ENCODE measurements at regions of chr22 and their contacts with region 1.

Region 1: GRCh38 chr22:29245637-29246385 is 22.0 kb downstream of the RHBDD3 start:
- DNase-seq: peak; percentile 67 to 81 (median 79)
- H3K4me3 ChIP-seq: no peak overlapping the region
- H3K27ac ChIP-seq: no peak overlapping the region
- H3K4me1 ChIP-seq: peaks cover 0 to 9% (median 5%) of the 10 kb centered on the region in 4 experiments
- H3K27me3 ChIP-seq: no peaks in the 10 kb centered on the region

Region 2: GRCh38 chr22:29225422-29226131 is 20.2 kb before region 1 on chr22:
- CTCF ChIA-PET with region 1: interaction called, 10 read pairs
- POLR2A ChIA-PET with region 1: interaction called, 4 read pairs
- DNase-seq: peak in 2 of 3 donors; percentile 71 to 81
- H3K4me3 ChIP-seq: no peak overlapping the region
- H3K27ac ChIP-seq: peak overlapping the region in 1 of 2 experiments; percentile 6
- H3K4me1 ChIP-seq: peaks cover 0 to 29% (median 14%) of the 10 kb centered on the region in 4 experiments
- H3K27me3 ChIP-seq: no peaks in the 10 kb centered on the region

Region 3: GRCh38 chr22:29275819-29276565 is 30.2 kb after region 1 on chr22:
- CTCF ChIA-PET with region 1: no interaction called
- POLR2A ChIA-PET with region 1: no interaction called
- DNase-seq: no peak
- H3K4me3 ChIP-seq: no peak overlapping the region
- H3K27ac ChIP-seq: no peak overlapping the region
- H3K4me1 ChIP-seq: peaks cover 6 to 19% (median 8%) of the 10 kb centered on the region in 4 experiments
- H3K27me3 ChIP-seq: no peaks in the 10 kb centered on the region

Region 4: GRCh38 chr22:29330753-29331152 is 84.9 kb after region 1 on chr22:
- CTCF ChIA-PET with region 1: no interaction called
- POLR2A ChIA-PET with region 1: no interaction called
- DNase-seq: no peak
- H3K4me3 ChIP-seq: no peak overlapping the region
- H3K27ac ChIP-seq: no peak overlapping the region
- H3K4me1 ChIP-seq: no peaks in the 10 kb centered on the region
- H3K27me3 ChIP-seq: no peaks in the 10 kb centered on the region

Measured in common myeloid progenitor, CD34-positive (primary cell).